ENCODE measurements at regions of chr7 and their contacts with region 1.

Region 1: DNA sequence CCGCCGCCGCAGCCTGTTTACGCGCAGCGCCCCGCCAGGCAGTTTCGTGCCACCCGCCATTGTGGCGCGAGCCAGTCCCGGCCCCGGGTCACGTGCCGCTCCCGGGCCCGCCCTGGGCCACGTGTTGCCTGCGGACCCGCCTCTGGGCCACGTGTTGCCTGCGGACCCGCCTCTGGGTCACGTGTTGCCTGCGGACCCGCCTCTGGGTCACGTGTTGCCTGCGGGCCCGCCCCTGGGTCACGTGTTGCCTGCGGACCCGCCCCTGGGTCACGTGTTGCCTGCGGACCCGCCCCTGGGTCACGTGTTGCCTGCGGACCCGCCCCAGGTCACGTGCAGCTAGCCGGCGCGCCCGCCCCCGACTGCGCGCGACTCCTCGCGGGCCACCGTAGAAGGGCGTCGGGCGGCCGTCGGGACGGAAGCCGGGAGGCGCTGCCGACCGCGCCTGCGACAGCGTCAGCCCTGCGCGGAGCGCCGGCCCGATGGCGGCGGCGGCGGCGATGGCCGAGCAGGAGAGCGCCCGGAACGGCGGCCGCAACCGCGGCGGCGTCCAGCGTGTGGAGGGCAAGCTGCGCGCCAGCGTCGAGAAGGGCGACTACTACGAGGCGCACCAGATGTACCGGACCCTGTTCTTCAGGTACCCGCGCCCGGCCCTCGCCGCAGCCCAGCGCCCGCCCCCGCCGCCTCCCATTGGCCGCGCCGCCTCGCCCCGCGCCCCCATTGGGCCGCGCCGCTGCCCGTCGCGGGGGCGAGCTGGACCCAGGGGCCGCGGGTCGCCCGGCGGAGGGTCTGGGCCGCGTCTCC is at the start of gene GET4:
- DNase-seq: peak; percentile 97
- H3K4me3 Mint-ChIP-seq: peak within 1 kb of the TSS; percentile 96
- H3K27ac Mint-ChIP-seq: peak within 1 kb of the TSS; percentile 87
- H3K4me1 Mint-ChIP-seq: peaks cover 26% of the 10 kb centered on the region
- H3K27me3 Mint-ChIP-seq: no peaks in the 10 kb centered on the region
- total RNA-seq, gene GET4: 32.6 to 38.2 TPM

Region 2: DNA sequence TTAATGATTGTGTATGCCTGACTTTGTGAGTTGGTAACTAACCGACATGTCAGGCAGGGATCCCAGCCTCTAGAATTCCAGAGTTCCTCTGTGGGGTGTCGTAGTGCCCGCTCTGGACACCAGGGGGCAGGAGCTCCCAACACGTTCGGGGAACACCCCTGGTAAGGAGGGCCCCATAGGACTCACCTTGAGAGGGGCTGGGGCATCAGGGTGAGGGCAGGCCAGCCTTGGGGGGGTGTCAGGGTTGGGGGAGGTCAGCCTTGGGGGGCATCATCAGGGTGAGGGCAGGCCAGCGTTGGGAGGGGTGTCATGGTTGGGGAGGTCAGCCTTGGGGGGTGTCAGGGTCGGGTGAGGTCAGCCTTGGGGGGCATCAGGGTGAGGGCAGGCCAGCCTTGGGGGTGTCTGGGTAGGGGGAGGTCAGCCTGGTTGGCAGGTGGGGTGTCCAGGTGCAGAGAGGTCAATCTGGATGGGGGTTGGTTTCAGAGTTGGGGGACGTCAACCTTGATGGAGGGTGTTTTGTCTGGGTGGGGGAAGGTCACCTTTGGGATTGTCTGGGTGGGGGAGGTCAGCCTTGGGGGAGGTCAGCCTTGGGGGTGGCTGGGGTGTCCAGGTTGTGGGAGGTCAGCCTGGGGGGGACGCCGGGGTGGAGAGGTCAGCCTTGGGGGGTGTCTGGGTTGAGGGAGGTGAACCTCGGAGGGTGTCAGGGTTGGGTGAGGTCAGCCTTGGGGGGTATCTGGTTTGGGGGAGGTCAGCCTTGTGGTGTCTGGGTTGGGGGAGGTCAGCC is 89.7 kb before region 1 on chr7:
- CTCF ChIA-PET with region 1: interaction called, 32 read pairs
- POLR2A ChIA-PET with region 1: interaction called, 8 read pairs
- DNase-seq: peak; percentile 70
- H3K4me3 Mint-ChIP-seq: no peak overlapping the region
- H3K27ac Mint-ChIP-seq: no peak overlapping the region
- H3K4me1 Mint-ChIP-seq: no peaks in the 10 kb centered on the region
- H3K27me3 Mint-ChIP-seq: no peaks in the 10 kb centered on the region

Region 3: DNA sequence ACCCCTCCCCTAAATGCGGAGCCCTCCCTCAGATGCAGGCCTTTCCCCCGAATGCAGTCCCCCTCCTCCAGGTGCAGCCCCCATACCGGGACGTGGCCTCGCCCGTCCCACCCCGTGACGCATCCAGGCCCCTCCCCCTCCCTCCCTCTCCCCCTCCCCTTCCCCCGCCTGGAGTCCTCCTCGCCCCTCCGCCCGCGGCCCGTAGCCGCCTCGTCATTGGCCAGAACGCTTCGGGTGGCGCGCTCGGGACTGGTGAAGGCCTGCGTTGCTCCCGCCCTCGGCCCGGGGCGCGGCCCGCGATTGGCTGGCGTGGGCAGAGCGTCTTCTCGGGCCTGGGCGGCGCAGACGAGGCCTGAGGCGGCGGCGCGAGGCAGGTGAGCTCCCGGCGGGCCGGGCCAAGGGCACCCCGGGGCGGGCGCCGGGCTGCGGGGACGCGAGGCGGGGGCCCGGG is 60.0 kb before region 1 on chr7:
- CTCF ChIA-PET with region 1: interaction called, 5 read pairs
- POLR2A ChIA-PET with region 1: interaction called, 14 read pairs
- DNase-seq: peak; percentile 97
- H3K4me3 Mint-ChIP-seq: peak overlapping the region; percentile 71
- H3K27ac Mint-ChIP-seq: no peak overlapping the region
- H3K4me1 Mint-ChIP-seq: peaks cover 54% of the 10 kb centered on the region
- H3K27me3 Mint-ChIP-seq: peaks cover 26% of the 10 kb centered on the region

Region 4: DNA sequence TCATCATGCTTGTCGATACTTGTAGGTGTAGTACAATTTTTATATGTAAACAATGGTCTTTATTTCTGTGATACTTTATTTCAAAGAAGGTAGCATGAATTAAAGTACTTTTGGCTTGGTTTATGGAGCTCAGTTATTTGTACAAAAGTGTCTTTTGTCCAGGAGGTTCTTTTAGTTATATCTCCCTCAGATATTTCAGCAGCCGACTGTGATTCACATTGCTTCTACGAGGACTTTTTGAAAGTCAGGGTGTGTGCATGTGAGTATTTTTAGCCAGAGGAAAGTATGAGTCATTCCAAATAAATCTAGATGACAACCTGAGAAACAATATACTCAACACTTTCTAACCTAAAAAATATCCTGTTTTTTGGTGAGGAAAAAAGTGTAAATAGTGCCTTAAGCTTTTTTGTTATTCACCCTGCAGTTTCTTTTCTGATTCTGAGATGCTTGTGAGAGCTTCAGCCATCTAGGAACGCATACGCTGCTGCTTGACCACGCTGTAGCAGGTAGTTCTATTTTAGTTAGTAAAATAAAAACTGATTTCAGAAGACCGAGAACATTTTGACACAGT is 44.7 kb before region 1 on chr7:
- CTCF ChIA-PET with region 1: interaction called, 14 read pairs
- POLR2A ChIA-PET with region 1: interaction called, 9 read pairs
- DNase-seq: peak; percentile 23
- H3K4me3 Mint-ChIP-seq: peak overlapping the region; percentile 73
- H3K27ac Mint-ChIP-seq: peak overlapping the region; percentile 97
- H3K4me1 Mint-ChIP-seq: peaks cover 59% of the 10 kb centered on the region
- H3K27me3 Mint-ChIP-seq: no peaks in the 10 kb centered on the region

Region 5: GRCh38 chr7:863106-863505 is 13.3 kb before region 1 on chr7:
- CTCF ChIA-PET with region 1: interaction called, 10 read pairs
- POLR2A ChIA-PET with region 1: interaction called, 3 read pairs
- DNase-seq: no peak
- H3K4me3 Mint-ChIP-seq: no peak overlapping the region
- H3K27ac Mint-ChIP-seq: no peak overlapping the region
- H3K4me1 Mint-ChIP-seq: no peaks in the 10 kb centered on the region
- H3K27me3 Mint-ChIP-seq: no peaks in the 10 kb centered on the region

Measured in activated CD4-positive, alpha-beta memory T cell treated with anti-CD3 and anti-CD28 coated beads, Interleukin-2, amount 10 ng/mL, durations not matched to agents 7 days and 5 days (primary cell).